ENCODE measurements at regions of chr1 and their contacts with region 1.

Region 1: GRCh38 chr1:112882271-112882744 is 73.7 kb downstream of the SLC16A1 start:
- ATAC-seq: peak in 3 of 8 experiments; percentile 39 to 70 (median 46)
- H3K4me3 ChIP-seq: no peak overlapping the region
- H3K27ac ChIP-seq: no peak overlapping the region
- H3K4me1 ChIP-seq: peaks cover 3 to 5% of the 10 kb centered on the region in 2 donors

Region 2: DNA sequence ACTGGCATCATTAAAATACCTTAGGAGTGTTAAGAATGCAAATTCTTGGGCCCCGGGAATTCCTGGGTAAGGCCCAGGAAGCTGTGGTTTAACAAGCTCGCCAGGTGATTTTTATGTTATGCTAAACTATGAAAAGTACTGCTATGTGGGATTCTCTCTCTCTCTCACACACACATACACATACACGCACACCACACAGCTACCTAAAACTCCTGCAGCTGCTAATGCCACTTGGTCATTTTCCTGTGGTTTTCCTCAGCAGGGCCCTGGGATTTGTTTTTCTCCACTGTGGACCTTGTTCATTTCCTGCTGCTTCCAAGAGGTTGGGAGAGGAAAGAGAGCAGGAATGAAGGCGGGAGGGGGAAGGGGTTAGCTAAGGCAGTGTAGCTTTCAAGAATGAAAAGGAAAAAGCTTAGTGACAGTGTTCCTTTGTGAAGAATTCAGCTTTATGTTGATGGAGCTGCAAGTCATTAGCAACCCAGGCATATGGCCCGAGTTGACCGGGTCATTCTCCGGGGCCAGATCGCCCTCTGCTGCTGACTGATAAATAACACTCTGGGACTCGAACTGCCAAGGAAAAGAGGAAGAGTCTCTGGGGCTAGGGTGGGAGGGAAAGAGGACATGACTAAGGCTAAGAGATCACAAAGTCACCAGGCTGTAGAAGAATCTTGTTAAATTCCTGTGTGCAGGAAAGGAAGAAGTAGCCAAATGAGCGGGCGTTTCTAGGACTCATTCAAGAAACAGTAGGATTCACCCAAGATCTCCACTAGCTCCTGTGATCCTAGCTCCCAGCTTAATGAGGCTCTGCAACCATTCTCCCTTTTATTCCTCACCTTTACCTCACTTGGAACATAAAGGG is 160.2 kb after region 1 on chr1:
- in situ Hi-C with region 1: loop called in 2 of 9 experiments (anchors 25 kb)
- ATAC-seq: peak; percentile 90 to 96 (median 92)
- H3K4me3 ChIP-seq: no peak overlapping the region
- H3K27ac ChIP-seq: peak overlapping the region; percentile 52 to 79
- H3K4me1 ChIP-seq: peaks cover 20 to 29% of the 10 kb centered on the region in 2 donors